HCT116 (cell line): ENCODE measurements at regions of chr16 and their contacts with region 1.

Region 1: GRCh38 chr16:4475880-4476788 is at the start of gene HMOX2:
- DNase-seq: peak; percentile 90
- ATAC-seq: peak; percentile 82
- H3K4me3 ChIP-seq: peak within 1 kb of the TSS; percentile 93 to 95
- H3K27ac ChIP-seq: peak within 1 kb of the TSS; percentile 86
- H3K4me1 ChIP-seq: peaks cover 20 to 42% of the 10 kb centered on the region in 2 experiments
- H3K27me3 ChIP-seq: no peaks in the 10 kb centered on the region
- CTCF ChIP-seq: peak in 2 of 3 experiments; percentile 51 to 58; a peak in 4 of 6 replicates
- POLR2A ChIP-seq: peak; percentile 90
- RAD21 ChIP-seq: no peak
- total RNA-seq, gene HMOX2: 55.1 TPM

Region 2: DNA sequence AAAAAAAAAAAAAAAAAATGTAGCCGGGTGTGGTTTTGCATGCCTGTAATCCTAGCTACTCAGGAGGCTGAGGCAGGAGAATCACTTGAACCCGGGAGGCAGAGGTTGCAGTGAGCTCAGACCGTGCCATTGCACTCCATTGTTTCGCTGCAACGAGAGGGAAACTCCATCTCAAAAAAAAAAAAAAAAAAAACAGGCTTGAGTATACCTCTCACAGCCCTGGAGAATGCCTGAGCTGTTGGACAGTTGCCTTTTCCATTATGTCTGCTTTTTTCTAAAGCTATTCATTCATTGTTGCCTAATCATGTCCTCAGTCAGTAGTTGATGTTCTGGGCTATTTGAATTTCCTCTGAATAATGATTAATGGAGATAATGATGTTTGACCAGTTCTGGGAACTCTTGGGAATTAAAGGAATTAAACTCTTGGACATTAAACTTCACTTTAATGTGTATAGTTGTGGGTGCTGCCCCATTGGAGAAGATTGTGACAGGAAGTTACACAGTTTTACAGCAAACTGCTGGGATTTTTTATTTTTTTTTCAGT is 11.9 kb after region 1 on chr16:
- CTCF ChIA-PET with region 1: interaction called, 3 read pairs
- POLR2A ChIA-PET with region 1: interaction called, 10 read pairs
- RAD21 ChIA-PET with region 1: no interaction called
- intact Hi-C with region 1: no loop called
- DNase-seq: no peak
- ATAC-seq: no peak
- H3K4me3 ChIP-seq: no peak overlapping the region
- H3K27ac ChIP-seq: peak overlapping the region; percentile 52; the same call in 1 of the 2 replicates
- H3K4me1 ChIP-seq: peaks cover 19 to 37% of the 10 kb centered on the region in 2 experiments
- H3K27me3 ChIP-seq: no peaks in the 10 kb centered on the region
- CTCF ChIP-seq: no peak
- POLR2A ChIP-seq: no peak
- RAD21 ChIP-seq: no peak

Region 3: GRCh38 chr16:4494746-4495490 is 18.8 kb after region 1 on chr16:
- CTCF ChIA-PET with region 1: no interaction called
- POLR2A ChIA-PET with region 1: interaction called, 26 read pairs
- RAD21 ChIA-PET with region 1: no interaction called
- intact Hi-C with region 1: no loop called
- DNase-seq: peak; percentile 81
- ATAC-seq: peak; percentile 83
- H3K4me3 ChIP-seq: peak overlapping the region in 1 of 2 experiments; percentile 30; a peak in 2 of 4 replicates
- H3K27ac ChIP-seq: peak overlapping the region; percentile 79
- H3K4me1 ChIP-seq: peaks cover 57 to 81% of the 10 kb centered on the region in 2 experiments
- H3K27me3 ChIP-seq: no peaks in the 10 kb centered on the region
- CTCF ChIP-seq: no peak
- POLR2A ChIP-seq: no peak
- RAD21 ChIP-seq: no peak

Region 4: DNA sequence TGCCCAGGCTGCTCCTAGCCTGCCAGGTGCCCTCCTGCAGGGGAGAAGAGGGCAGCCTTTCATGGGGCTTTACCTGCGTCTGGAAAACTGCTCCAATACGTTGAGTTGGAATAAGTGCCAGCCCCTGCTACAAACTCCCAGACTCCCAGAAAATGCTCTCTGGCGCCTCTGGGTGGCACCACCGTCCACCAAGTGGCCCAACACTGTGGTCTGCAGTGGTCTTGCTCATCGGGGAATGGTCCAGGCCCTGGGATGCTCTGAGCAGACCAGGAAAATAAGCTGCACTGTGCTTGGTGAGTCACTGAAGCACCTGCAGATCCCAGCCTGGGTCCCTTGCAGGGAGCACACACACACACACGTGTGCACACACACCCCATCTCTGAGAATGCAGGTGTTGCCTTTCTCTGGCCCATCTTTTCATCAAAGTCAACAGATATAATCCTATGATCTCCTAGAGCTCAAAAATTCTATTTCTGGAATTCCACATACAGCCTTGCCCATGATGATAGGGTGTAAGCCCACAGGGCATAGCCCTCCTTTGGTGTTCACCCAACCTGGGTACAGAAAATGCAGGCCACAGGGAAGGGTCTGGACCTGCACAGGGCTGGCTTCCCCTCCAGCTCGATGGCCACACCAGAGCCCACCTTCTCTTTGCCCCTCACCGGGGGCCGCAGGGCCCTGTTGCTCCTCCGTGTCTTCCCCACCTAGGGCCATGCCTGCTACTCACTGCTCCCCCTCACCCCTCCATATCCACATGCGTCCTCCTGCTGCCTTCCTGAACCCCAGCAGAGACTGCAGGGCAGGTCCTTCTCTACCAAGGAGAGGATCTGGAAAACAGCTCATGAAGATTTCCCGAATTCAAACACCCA is 41.9 kb after region 1 on chr16:
- CTCF ChIA-PET with region 1: no interaction called
- POLR2A ChIA-PET with region 1: no interaction called
- RAD21 ChIA-PET with region 1: no interaction called
- intact Hi-C with region 1: no loop called
- DNase-seq: no peak
- ATAC-seq: peak; percentile 84
- H3K4me3 ChIP-seq: no peak overlapping the region
- H3K27ac ChIP-seq: no peak overlapping the region
- H3K4me1 ChIP-seq: no peaks in the 10 kb centered on the region
- H3K27me3 ChIP-seq: no peaks in the 10 kb centered on the region
- CTCF ChIP-seq: peak; percentile 67 to 81 (median 80)
- POLR2A ChIP-seq: no peak
- RAD21 ChIP-seq: peak; percentile 85